ENCODE measurements at regions of chr4 and their contacts with region 1.

Region 1: DNA sequence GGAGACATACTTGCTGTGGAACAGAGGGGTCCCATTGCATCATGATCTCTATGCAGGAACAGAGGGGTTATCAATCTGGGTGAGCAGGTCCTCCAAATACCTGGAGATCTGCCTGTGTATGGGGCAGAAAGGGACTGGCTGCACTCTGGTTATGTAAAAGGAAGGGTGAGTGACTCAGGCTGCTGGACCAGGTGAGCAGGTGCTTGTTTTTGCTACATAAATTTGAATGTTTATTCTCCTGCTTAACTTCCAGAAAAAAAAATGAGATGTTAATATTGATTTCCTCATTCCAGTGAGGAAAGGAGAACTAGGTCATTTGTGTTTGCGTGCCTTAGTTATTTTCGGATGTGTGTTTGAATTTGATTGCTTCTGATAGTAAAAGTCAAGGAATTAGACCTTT is 225.8 kb upstream of the TRAM1L1 start:
- DNase-seq: no peak
- H3K4me3 ChIP-seq: no peak overlapping the region
- H3K27ac ChIP-seq: no peak overlapping the region
- H3K4me1 ChIP-seq: no peaks in the 10 kb centered on the region
- H3K27me3 ChIP-seq: no peaks in the 10 kb centered on the region
- CTCF ChIP-seq: no peak

Region 2: DNA sequence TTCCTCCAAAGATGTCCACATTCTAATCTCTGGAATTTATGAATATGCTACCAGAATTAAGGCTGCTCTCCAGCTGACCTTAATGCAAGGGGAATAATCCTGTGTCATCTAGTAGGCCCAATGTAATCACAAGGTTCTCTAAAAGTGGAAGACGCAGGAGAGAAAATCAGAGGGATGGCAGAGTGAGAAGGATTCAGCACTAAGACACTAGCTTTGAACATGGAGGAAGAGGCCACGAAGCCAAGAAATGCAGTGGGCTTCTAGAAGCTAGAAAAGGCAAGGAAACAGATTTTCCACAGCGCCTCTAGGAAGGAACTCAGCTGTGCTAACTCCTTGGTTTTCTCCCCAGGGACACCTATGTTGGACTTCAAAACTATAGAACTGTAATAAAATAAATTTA is 14.9 kb after region 1 on chr4:
- CTCF ChIA-PET with region 1: no interaction called
- POLR2A ChIA-PET with region 1: interaction called, 12 read pairs
- intact Hi-C with region 1: no loop called
- DNase-seq: no peak
- H3K4me3 ChIP-seq: no peak overlapping the region
- H3K27ac ChIP-seq: no peak overlapping the region
- H3K4me1 ChIP-seq: no peaks in the 10 kb centered on the region
- H3K27me3 ChIP-seq: no peaks in the 10 kb centered on the region
- CTCF ChIP-seq: no peak